PC-3 (cell line): ENCODE measurements at regions of chr1 and their contacts with region 1.

Region 1: DNA sequence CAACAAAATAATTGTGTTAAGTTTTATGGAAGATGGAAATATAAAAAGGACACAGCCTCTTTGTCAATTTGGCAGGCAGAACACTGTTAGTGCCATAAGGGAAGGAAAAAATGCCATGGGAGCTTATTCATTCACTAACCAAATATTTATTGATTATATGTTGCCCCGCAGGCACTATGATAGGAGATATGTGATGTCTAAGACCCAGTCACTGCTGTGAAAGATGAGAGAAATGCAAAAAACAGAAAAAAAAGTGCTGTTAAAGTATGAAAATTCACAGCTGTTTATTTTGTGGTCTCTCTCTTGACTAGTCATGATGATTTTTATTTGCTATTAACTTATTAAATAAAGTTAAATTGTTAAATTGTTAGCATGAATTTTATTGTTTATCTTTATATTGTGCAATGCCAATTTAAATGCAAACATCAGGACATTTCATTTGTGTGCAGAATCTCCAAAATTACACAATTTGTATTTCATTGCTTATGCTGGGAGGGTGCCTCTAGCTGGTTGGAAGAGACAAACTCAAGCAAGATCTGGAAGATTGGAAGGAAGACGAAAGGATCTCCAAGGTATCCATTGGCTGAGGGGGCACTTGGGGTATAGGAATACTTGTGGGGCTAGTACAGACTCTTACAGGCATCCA is 17.8 kb upstream of the PTGFR start:
- DNase-seq: peak; percentile 98
- ATAC-seq: peak; percentile 77
- H3K4me3 ChIP-seq: 0 out of 2 replicates have a peak overlapping the region, but pooled peaks have one; percentile 26
- H3K27ac ChIP-seq: peak overlapping the region; percentile 97
- H3K4me1 ChIP-seq: peaks cover 58% of the 10 kb centered on the region
- H3K27me3 ChIP-seq: no peaks in the 10 kb centered on the region
- CTCF ChIP-seq: no peak

Region 2: DNA sequence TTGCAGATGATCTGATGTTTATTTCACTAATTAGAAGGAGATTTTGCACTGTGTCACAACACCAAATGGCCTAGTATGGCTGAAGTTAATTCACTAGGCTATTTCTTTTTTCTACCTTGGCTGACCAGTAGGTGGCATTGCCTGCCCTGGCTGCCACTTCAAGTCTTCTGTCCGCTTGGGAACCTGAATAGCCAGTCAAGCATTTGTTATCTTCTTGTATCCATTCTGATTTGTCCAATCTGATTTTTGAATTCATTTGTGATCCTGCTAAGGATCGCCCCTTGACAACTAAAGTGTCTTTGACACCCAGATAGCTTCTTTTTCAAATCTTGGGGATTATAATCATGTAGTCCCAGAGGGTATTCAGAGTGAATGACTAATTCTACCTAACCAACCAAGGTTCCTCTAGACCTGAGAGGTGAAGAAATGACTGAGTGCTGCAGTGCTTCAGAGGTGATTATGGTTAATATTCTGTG is 327.8 kb before region 1 on chr1:
- CTCF ChIA-PET with region 1: no interaction called
- POLR2A ChIA-PET with region 1: no interaction called
- intact Hi-C with region 1: loop called (anchors 2 kb)
- DNase-seq: peak; percentile 85
- ATAC-seq: peak; percentile 74
- H3K4me3 ChIP-seq: no peak overlapping the region
- H3K27ac ChIP-seq: peak overlapping the region; percentile 61
- H3K4me1 ChIP-seq: peaks cover 35% of the 10 kb centered on the region
- H3K27me3 ChIP-seq: no peaks in the 10 kb centered on the region
- CTCF ChIP-seq: peak; percentile 97

Region 3: DNA sequence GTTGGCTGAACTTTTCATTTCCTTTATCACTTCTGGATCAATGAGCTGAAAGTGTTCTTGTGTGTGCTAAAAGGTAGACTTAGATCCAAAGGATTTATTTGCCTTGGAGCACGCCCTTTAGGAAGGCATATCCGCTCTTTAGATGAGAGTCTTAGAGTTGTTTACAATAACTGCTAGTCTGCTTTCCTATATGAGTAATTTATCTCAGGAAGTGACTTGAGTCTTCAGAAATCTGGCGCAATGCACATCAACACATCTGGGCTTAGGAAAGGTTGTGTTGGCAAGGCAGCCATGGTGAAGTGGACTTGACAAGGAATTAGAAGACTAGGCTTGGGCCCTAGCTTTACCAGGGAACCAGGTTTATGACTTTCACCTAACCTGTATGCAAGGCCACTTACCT is 186.3 kb before region 1 on chr1:
- CTCF ChIA-PET with region 1: no interaction called
- POLR2A ChIA-PET with region 1: no interaction called
- intact Hi-C with region 1: loop called (anchors 2 kb)
- DNase-seq: peak; percentile 84
- ATAC-seq: peak; percentile 94
- H3K4me3 ChIP-seq: no peak overlapping the region
- H3K27ac ChIP-seq: peak overlapping the region; percentile 84
- H3K4me1 ChIP-seq: peaks cover 11% of the 10 kb centered on the region
- H3K27me3 ChIP-seq: no peaks in the 10 kb centered on the region
- CTCF ChIP-seq: no peak

Region 4: GRCh38 chr1:78348496-78349284 is 124.3 kb before region 1 on chr1:
- CTCF ChIA-PET with region 1: no interaction called
- POLR2A ChIA-PET with region 1: no interaction called
- intact Hi-C with region 1: loop called (anchors 1 kb)
- DNase-seq: no peak
- ATAC-seq: no peak
- H3K4me3 ChIP-seq: no peak overlapping the region
- H3K27ac ChIP-seq: no peak overlapping the region
- H3K4me1 ChIP-seq: peaks cover 10% of the 10 kb centered on the region; the same call in 1 of the 2 replicates
- H3K27me3 ChIP-seq: no peaks in the 10 kb centered on the region
- CTCF ChIP-seq: no peak

Region 5: GRCh38 chr1:78359666-78360065 is 113.3 kb before region 1 on chr1:
- CTCF ChIA-PET with region 1: no interaction called
- POLR2A ChIA-PET with region 1: no interaction called
- intact Hi-C with region 1: no loop called
- DNase-seq: peak; percentile 53
- ATAC-seq: peak; percentile 66
- H3K4me3 ChIP-seq: peak overlapping the region; percentile 25
- H3K27ac ChIP-seq: no peak overlapping the region
- H3K4me1 ChIP-seq: peaks cover 22% of the 10 kb centered on the region
- H3K27me3 ChIP-seq: no peaks in the 10 kb centered on the region
- CTCF ChIP-seq: no peak

Region 6: GRCh38 chr1:78501203-78501602 is 28.2 kb after region 1 on chr1:
- CTCF ChIA-PET with region 1: interaction called, 3 read pairs
- POLR2A ChIA-PET with region 1: interaction called, 4 read pairs
- intact Hi-C with region 1: loop called (anchors 2 kb)
- DNase-seq: peak; percentile 22
- ATAC-seq: peak; percentile 87
- H3K4me3 ChIP-seq: no peak overlapping the region
- H3K27ac ChIP-seq: peak overlapping the region; percentile 21; the same call in 1 of the 2 replicates
- H3K4me1 ChIP-seq: peaks cover 18% of the 10 kb centered on the region; the same call in 1 of the 2 replicates
- H3K27me3 ChIP-seq: no peaks in the 10 kb centered on the region
- CTCF ChIP-seq: no peak

Region 7: GRCh38 chr1:78599300-78599699 is 126.3 kb after region 1 on chr1:
- CTCF ChIA-PET with region 1: no interaction called
- POLR2A ChIA-PET with region 1: no interaction called
- intact Hi-C with region 1: no loop called
- DNase-seq: no peak
- ATAC-seq: no peak
- H3K4me3 ChIP-seq: no peak overlapping the region
- H3K27ac ChIP-seq: no peak overlapping the region
- H3K4me1 ChIP-seq: no peaks in the 10 kb centered on the region
- H3K27me3 ChIP-seq: no peaks in the 10 kb centered on the region
- CTCF ChIP-seq: no peak

Region 8: DNA sequence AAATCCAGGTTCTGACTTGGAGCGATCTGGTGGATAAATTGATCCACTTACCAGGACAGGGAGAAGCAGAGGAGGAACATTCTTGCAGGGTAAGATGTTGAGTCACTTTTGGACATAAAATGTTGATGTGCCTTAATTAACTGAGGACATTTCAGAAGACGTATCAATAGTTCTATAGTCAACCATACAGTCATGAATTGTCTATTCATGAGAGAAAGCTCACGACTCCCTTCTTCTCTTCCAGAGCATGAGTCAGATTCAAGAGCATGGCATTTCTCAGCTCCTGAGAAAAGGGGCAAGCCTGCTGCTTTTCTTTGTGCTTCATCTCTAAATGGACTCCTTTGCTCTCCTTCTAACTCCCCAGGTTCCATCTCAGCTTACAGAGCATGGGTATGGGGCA is 477.8 kb after region 1 on chr1:
- CTCF ChIA-PET with region 1: no interaction called
- POLR2A ChIA-PET with region 1: no interaction called
- intact Hi-C with region 1: no loop called
- DNase-seq: no peak
- ATAC-seq: no peak
- H3K4me3 ChIP-seq: no peak overlapping the region
- H3K27ac ChIP-seq: no peak overlapping the region
- H3K4me1 ChIP-seq: no peaks in the 10 kb centered on the region
- H3K27me3 ChIP-seq: no peaks in the 10 kb centered on the region
- CTCF ChIP-seq: no peak